AG04450 (cell line): ENCODE measurements at regions of chr19 and their contacts with region 1.

Region 1: GRCh38 chr19:3094601-3095437 is 657 bp downstream of the GNA11 start:
- DNase-seq: no peak
- H3K4me3 ChIP-seq: peak overlapping the region; percentile 87
- H3K27ac ChIP-seq: peak overlapping the region; percentile 21
- H3K27me3 ChIP-seq: no peaks in the 10 kb centered on the region
- CTCF ChIP-seq: no peak

Region 2: GRCh38 chr19:2952953-2953491 is 141.8 kb before region 1 on chr19:
- CTCF ChIA-PET with region 1: no interaction called
- POLR2A ChIA-PET with region 1: no interaction called
- DNase-seq: no peak
- H3K4me3 ChIP-seq: peak overlapping the region; percentile 10; the same call in 1 of the 2 replicates
- H3K27ac ChIP-seq: no peak overlapping the region
- H3K27me3 ChIP-seq: no peaks in the 10 kb centered on the region
- CTCF ChIP-seq: no peak

Region 3: GRCh38 chr19:3075895-3076431 is 18.9 kb before region 1 on chr19:
- CTCF ChIA-PET with region 1: interaction called, 12 read pairs
- POLR2A ChIA-PET with region 1: interaction called, 6 read pairs
- DNase-seq: no peak
- H3K4me3 ChIP-seq: peak overlapping the region; percentile 43
- H3K27ac ChIP-seq: no peak overlapping the region
- H3K27me3 ChIP-seq: no peaks in the 10 kb centered on the region
- CTCF ChIP-seq: peak; percentile 85

Region 4: GRCh38 chr19:3152431-3152780 is 57.6 kb after region 1 on chr19:
- CTCF ChIA-PET with region 1: no interaction called
- POLR2A ChIA-PET with region 1: no interaction called
- DNase-seq: no peak
- H3K4me3 ChIP-seq: no peak overlapping the region
- H3K27ac ChIP-seq: no peak overlapping the region
- H3K27me3 ChIP-seq: no peaks in the 10 kb centered on the region
- CTCF ChIP-seq: no peak